Endothelial cell of umbilical vein (primary cell): ENCODE measurements at regions of chr7 and their contacts with region 1.

Region 1: DNA sequence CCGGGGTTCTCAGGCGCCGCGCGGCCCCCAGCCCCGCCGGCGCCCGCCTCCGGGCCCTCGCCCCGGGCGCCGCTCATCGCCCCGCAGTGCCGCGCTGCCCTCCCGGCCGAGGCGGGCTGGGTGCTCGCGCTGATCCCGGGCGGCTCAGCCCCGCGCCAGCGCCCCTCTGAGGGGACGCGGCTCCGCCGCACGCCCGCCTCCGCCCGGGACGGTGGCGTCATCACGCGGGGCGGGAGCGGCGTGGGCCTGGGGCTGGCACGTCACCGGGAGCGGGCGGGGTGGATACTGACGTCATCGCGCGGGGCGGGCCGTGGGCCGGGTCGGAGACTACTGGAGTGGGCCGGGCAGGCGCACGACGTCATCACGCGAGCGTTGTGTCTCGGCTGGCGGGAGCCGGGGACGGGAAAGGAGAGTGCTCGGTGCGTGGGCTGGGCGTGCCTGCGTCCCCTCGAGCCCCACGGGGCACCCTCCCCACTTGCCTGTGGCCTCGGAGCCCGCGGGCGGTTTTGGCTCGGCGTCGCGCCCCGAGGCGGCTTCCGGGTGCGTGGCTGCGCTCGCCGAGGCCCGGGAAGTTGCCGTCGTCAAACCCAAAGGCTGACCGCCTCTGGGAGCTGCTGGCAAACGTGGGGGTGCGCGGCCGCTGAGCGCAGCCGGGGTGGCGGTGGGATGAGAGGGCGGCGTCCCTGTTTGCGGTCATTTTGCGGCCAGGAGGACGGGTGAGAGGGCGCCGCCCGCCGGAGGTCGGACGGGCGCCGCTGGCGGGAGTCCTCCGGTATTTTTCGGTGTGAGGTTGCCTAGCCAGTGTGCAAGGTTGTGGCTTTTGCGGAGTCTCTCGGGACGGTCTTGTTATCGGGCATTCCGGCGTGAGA is at the start of gene ESYT2:
- DNase-seq: peak; percentile 97
- H3K4me3 ChIP-seq: peak within 1 kb of the TSS; percentile 72 to 99 (median 80)
- H3K27ac ChIP-seq: peak within 1 kb of the TSS; percentile 66
- H3K4me1 ChIP-seq: peaks cover 10% of the 10 kb centered on the region
- H3K27me3 ChIP-seq: peaks cover 0 to 1% of the 10 kb centered on the region in 2 experiments
- CTCF ChIP-seq: peak in 1 of 2 donors; percentile 22
- POLR2A ChIP-seq: peak; percentile 92
- total RNA-seq, gene ESYT2: 40.6 and 46.6 TPM in 2 replicates

Region 2: DNA sequence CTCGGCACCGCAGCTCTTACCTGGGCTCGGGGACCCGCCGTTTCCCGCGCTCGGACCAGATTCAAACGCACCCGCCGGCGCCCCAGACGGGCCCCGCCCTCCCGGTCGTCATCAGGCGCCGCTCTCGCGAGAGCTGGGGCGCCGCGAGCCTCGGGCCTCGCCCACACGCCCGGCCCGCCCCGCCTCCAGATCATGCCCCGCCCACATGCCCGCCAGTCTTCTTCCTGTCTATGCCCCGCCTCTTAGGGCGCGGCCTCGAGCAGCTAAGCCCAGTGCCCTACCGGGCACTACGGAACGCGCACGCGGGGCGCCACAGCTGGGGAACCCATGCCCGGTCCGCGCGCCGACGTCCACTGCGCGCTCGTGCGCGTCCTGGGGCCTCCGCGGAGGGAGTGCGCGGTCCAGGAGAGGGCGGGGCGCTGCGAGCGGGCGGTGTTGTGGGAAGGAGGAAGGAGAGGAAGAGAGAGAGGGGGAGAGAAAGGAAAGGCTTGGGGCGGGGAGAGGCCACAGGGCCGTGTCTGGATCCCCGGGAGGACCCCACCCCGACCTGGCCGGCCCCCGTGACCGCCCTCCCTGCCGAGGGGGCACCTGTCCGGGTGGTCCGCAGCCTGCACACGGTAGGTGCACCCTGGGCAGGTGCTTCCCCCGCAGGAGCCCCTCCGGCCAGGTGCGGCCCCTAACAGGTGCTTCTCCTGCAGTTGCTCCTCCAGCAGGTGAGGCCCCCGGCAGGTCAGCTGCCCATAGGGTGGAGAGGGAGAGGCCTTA is 124.7 kb before region 1 on chr7 and contains the start of gene NCAPG2:
- CTCF ChIA-PET with region 1: no interaction called
- POLR2A ChIA-PET with region 1: no interaction called
- dilution Hi-C with region 1: no loop called
- intact Hi-C with region 1: loop called (anchors 1 kb)
- DNase-seq: peak; percentile 98
- H3K4me3 ChIP-seq: peak within 1 kb of the TSS; percentile 87 to 100 (median 89)
- H3K27ac ChIP-seq: peak within 1 kb of the TSS; percentile 78
- H3K4me1 ChIP-seq: peaks cover 24% of the 10 kb centered on the region
- H3K27me3 ChIP-seq: no peaks in the 10 kb centered on the region
- CTCF ChIP-seq: no peak
- POLR2A ChIP-seq: peak; percentile 45
- total RNA-seq, gene NCAPG2: 62.3 and 66.9 TPM in 2 replicates

Region 3: DNA sequence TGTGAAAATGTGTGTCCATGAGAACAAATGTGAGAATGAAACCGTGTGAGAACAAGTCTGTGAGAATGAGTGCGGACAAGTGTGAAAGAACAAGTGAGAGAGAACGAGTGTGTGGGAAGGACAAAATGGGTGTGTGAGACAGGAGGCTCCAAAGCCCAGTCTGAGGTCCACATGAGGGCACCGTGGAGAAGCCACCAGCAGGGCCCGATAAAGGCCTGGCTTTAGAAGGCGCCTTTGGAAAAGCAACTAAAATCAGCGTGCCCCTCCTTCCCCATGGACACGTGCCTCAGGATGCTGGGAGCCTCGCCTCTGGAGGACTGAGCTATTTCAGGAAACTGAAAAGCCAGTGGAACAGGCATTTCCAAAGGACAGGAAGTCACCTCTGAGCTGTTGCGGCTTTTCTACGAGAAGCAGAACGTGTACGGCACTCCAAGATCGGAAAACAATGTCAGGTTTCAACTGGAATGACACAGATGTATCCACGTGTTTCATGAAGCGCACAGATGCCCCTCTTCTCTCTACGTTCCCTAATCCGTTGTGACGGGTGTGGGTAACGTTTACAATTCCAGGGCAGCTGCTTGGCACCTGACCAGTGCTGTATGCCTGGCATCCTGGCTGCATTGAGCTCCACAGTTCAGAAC is 46.7 kb before region 1 on chr7:
- CTCF ChIA-PET with region 1: interaction called, 18 read pairs
- POLR2A ChIA-PET with region 1: interaction called, 5 read pairs
- dilution Hi-C with region 1: no loop called
- intact Hi-C with region 1: loop called (anchors 1 kb)
- DNase-seq: peak; percentile 80
- H3K4me3 ChIP-seq: no peak overlapping the region
- H3K27ac ChIP-seq: peak overlapping the region; percentile 4
- H3K4me1 ChIP-seq: peaks cover 12% of the 10 kb centered on the region
- H3K27me3 ChIP-seq: no peaks in the 10 kb centered on the region
- CTCF ChIP-seq: peak; percentile 48 to 53
- POLR2A ChIP-seq: no peak

Region 4: GRCh38 chr7:158818325-158819213 is 11.0 kb before region 1 on chr7:
- CTCF ChIA-PET with region 1: interaction called, 4 read pairs
- POLR2A ChIA-PET with region 1: no interaction called
- dilution Hi-C with region 1: no loop called
- intact Hi-C with region 1: loop called (anchors 1 kb)
- DNase-seq: peak; percentile 98
- H3K4me3 ChIP-seq: peak overlapping the region in 1 of 3 experiments; percentile 55
- H3K27ac ChIP-seq: peak overlapping the region; percentile 95
- H3K4me1 ChIP-seq: peaks cover 62% of the 10 kb centered on the region
- H3K27me3 ChIP-seq: no peaks in the 10 kb centered on the region
- CTCF ChIP-seq: no peak
- POLR2A ChIP-seq: peak; percentile 69

Region 5: GRCh38 chr7:158856883-158857668 is 27.5 kb after region 1 on chr7:
- CTCF ChIA-PET with region 1: no interaction called
- POLR2A ChIA-PET with region 1: interaction called, 4 read pairs
- dilution Hi-C with region 1: no loop called
- intact Hi-C with region 1: loop called (anchors 1 kb)
- DNase-seq: peak; percentile 19
- H3K4me3 ChIP-seq: peak overlapping the region; percentile 38 to 77 (median 63)
- H3K27ac ChIP-seq: no peak overlapping the region
- H3K4me1 ChIP-seq: peaks cover 12% of the 10 kb centered on the region
- H3K27me3 ChIP-seq: no peaks in the 10 kb centered on the region
- CTCF ChIP-seq: no peak
- POLR2A ChIP-seq: no peak